ENCODE measurements at regions of chr2 and their contacts with region 1.

Region 1: DNA sequence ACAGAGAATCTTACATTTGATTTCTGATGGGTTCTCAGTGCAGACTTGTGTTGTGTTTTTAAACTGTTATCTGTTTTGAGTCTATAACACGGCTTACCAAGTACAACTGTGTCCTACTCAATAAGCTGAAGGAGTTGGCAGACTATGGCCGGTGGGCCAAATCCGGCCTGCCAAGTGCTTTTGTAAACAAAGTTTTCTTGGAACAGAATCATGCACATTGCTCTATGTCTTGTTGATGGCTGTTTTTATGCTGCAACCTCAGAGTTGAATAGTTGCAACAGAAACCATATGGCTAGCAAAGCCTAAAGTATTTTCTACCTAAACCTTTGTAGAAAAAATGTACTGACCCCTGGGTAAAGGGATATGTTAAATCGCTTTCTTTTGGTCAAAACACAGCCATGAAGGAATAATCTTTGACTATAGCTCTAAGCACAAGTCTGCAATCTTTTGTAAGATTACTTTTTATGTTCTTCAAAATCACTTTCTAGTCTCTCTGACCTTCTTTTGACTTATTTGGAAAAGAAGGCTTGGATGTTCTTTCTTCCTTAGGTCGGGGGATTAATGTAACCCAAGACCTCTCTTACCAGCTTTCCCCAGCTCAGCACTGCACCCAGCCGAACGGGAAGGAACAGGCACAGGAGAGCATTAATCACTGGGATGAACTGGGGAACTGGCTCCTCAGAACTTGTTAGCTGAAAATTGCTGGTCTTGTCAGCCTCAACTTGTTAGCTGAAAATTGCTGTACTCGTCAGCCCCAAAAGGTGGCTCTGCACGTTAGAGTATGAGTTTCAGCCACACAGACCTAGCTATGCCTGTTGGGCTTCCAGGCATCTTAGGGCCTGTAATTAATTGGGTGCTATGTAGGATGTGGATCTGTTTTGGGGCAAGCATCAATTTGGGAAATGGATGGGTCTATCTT is 75.4 kb downstream of the CD8B2 start:
- DNase-seq: no peak
- H3K4me3 ChIP-seq: no peak overlapping the region
- H3K27ac ChIP-seq: no peak overlapping the region
- H3K27me3 ChIP-seq: no peaks in the 10 kb centered on the region
- CTCF ChIP-seq: no peak

Region 2: DNA sequence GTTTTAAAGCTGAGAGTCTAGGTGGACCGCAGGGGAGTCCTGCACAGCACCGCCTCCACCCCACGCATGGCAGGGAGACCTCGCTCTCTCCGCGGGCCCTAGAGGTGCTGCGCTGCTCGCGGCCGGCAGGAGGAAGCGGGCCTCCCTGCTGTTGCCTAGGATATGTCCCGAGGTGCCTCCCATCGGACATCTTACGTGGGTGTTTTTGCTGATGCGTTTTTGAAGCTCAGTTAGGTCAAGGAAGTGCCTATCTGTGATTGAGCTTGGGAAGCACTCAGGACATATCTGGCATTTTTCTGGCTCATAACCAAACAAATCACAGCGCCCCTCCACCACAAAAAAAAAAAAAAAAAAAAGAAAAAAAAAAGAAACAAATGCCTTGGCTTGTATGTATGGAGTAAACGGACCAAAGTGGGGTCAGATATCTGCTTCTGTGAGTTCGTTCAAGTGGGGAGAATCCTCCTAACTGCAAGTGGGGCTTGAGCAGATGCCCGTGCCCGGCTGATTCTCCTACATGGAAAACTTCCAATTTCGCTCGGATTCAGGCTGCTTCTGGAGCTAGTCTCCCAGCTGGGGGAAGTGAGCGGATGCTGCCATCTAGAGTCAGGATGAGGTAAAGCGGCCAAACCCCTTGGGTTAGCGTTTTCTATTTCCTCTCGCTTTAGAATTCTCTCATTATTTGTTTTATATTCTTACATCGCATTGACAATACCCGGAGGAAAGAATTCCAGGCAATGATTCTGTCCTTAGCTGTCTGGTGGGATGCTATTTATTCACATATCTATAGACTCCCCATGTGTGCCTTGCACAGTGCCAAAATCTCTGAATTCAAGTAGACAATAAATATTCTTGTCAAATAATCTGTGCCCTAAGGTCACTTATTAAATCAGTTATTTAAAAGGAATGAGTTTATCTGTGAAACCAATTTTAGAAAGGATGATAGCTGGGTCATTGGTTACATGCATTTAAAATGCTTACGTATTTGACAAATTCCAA is 19.9 kb after region 1 on chr2:
- CTCF ChIA-PET with region 1: interaction called, 6 read pairs
- POLR2A ChIA-PET with region 1: interaction called, 12 read pairs
- DNase-seq: peak; percentile 58
- H3K4me3 ChIP-seq: peak overlapping the region; percentile 48
- H3K27ac ChIP-seq: no peak overlapping the region
- H3K27me3 ChIP-seq: peaks cover 10% of the 10 kb centered on the region
- CTCF ChIP-seq: peak; percentile 94

Region 3: GRCh38 chr2:106664669-106665068 is 102.1 kb after region 1 on chr2:
- CTCF ChIA-PET with region 1: no interaction called
- POLR2A ChIA-PET with region 1: no interaction called
- DNase-seq: no peak
- H3K4me3 ChIP-seq: no peak overlapping the region
- H3K27ac ChIP-seq: no peak overlapping the region
- H3K27me3 ChIP-seq: no peaks in the 10 kb centered on the region
- CTCF ChIP-seq: no peak